A673 (cell line): ENCODE measurements at regions of chr1 and their contacts with region 1.

Region 1: GRCh38 chr1:35192853-35193664 is at the start of gene SFPQ:
- DNase-seq: peak; percentile 100
- H3K4me3 ChIP-seq: peak within 1 kb of the TSS; percentile 77
- H3K27ac ChIP-seq: peak within 1 kb of the TSS; percentile 99
- H3K4me1 ChIP-seq: peaks cover 26% of the 10 kb centered on the region
- H3K27me3 ChIP-seq: no peaks in the 10 kb centered on the region
- CTCF ChIP-seq: no peak
- total RNA-seq, gene SFPQ: 649 and 691 TPM in 2 replicates

Region 2: DNA sequence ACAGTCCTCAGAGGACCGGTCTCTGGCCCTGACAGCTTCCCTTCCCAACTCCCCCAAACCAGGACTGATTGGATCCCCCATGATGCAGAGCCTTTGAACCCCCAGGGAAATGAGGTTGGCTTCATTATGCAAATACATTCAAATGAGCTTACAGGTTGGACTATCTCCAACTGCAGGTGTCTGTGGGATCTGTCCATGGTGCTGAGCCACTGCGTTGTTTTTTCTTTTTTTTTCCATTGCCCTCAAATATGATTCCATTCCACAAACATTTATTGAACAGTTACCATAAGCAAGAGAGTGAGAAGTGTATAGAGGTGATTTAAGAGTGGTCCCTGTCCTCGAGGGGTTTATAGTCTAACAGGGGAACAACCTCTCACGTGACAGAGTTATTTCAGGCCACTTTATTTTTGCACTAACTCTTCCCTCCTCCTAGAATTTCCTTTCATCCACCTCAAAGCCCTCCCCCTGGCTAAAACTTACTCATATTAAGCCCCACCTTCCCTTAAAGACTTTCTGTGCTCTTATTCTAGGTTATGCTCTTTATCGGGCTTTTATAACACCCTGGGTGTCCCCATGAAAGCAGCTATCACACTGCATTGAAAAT is 285.5 kb before region 1 on chr1:
- CTCF ChIA-PET with region 1: no interaction called
- POLR2A ChIA-PET with region 1: no interaction called
- intact Hi-C with region 1: no loop called
- DNase-seq: no peak
- H3K4me3 ChIP-seq: no peak overlapping the region
- H3K27ac ChIP-seq: no peak overlapping the region
- H3K4me1 ChIP-seq: no peaks in the 10 kb centered on the region
- H3K27me3 ChIP-seq: peaks cover 27% of the 10 kb centered on the region
- CTCF ChIP-seq: no peak

Region 3: DNA sequence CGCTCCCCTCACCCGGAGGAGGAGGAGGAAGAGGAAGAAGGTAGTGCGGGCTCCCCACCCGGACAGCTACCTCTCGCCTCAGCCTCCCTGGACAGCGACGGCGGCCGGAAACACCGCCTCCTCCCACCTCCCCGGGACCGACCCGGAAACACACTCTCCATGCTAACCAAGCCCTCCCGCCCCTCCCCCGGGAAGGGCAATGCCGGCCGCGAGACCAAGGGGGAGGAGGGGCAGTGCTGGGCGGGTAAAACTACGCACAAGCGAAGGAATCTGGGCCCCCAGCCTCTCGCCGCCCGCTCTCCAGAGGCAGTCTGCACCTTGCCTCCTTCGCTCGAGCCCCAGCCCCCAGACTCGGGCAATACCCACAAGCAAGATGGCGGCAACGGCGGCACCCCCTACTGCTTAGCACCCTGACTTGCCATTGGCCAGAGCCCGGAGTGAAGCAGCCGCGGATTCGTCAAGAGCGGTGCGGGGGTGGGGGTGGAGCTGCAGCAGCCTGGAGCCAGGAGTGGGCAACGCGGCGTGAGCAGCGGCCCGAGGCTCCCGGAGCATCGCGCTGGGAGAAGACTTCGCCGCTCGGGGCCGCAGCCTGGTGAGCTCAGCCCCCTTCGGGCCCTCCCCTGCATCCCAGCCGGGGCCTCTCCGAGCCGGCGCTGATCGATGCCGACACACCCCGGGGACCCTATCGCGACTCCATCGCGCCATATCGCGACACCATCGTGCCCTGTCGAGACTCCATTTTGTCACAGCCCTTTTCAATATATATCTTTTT is 364.4 kb after region 1 on chr1 and contains the starts of genes KIAA0319L and NCDN:
- CTCF ChIA-PET with region 1: no interaction called
- POLR2A ChIA-PET with region 1: no interaction called
- intact Hi-C with region 1: loop called (anchors 5 kb)
- DNase-seq: peak; percentile 99
- H3K4me3 ChIP-seq: peak within 1 kb of the TSS; percentile 94
- H3K27ac ChIP-seq: peak within 1 kb of the TSS; percentile 92
- H3K4me1 ChIP-seq: peaks cover 14% of the 10 kb centered on the region
- H3K27me3 ChIP-seq: no peaks in the 10 kb centered on the region
- CTCF ChIP-seq: no peak
- total RNA-seq, gene KIAA0319L: 33.7 and 38.5 TPM in 2 replicates
- total RNA-seq, gene NCDN: 25.2 and 26.9 TPM in 2 replicates